ENCODE measurements at regions of chr6 and their contacts with region 1.

Region 1: GRCh38 chr6:134959603-134960002 is 9.7 kb upstream of the ALDH8A1 start:
- DNase-seq: no peak
- ATAC-seq: no peak
- H3K4me3 ChIP-seq: no peak overlapping the region
- H3K4me3 Mint-ChIP-seq: no peak overlapping the region
- H3K27ac ChIP-seq: no peak overlapping the region
- H3K27ac Mint-ChIP-seq: no peak overlapping the region
- H3K4me1 ChIP-seq: no peaks in the 10 kb centered on the region
- H3K4me1 Mint-ChIP-seq: no peaks in the 10 kb centered on the region
- H3K27me3 ChIP-seq: no peaks in the 10 kb centered on the region
- H3K27me3 Mint-ChIP-seq: no peaks in the 10 kb centered on the region

Region 2: GRCh38 chr6:134372603-134373281 is 586.9 kb before region 1 on chr6:
- CTCF ChIA-PET with region 1: no interaction called
- POLR2A ChIA-PET with region 1: interaction called in 1 of 2 experiments, 12 read pairs
- DNase-seq: peak in 5 of 35 experiments; percentile 2 to 53 (median 7)
- ATAC-seq: peak in 2 of 4 experiments; percentile 38 to 96
- H3K4me3 ChIP-seq: no peak overlapping the region
- H3K4me3 Mint-ChIP-seq: peak overlapping the region in 2 of 3 donors; percentile 3 to 8
- H3K27ac ChIP-seq: no peak overlapping the region
- H3K27ac Mint-ChIP-seq: no peak overlapping the region
- H3K4me1 ChIP-seq: peaks cover 5 to 16% of the 10 kb centered on the region in 2 experiments
- H3K4me1 Mint-ChIP-seq: peaks cover 21 to 32% (median 30%) of the 10 kb centered on the region in 3 donors
- H3K27me3 ChIP-seq: no peaks in the 10 kb centered on the region
- H3K27me3 Mint-ChIP-seq: no peaks in the 10 kb centered on the region

Measured in T-cell (primary cell).